ENCODE measurements at regions of chr1 and their contacts with region 1.

Region 1: DNA sequence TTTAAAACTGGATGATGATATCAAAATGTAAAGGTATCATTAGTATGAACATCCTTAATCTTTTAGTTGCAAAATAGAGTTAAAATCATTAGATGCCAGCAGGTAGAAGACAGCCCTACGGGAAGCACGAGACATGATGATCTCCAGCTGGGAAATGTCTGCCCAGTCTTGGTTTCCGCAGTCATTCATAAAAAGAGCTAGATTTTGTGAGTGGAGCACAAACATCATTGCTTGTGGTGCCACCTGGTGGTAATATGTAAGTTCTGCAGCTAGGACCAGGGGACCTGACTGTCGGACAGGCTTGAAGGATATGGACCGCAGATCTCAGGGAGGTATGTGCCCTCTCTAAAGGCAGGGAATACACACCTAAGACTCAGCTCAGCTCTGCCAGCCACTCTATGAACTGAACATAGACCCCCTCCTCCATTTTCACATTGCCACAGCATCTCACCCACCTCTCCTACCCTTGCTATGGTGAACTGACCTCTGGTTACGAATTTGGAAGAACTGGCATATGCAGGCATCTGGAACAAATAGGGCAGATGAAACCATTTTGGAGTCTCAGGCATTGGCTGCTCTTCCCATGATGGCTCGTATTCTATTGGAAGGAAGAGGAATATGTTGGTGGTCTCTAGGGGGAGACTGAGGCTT is 9.2 kb downstream of the FCMR start:
- DNase-seq: peak; percentile 80
- H3K4me3 ChIP-seq: no peak overlapping the region
- H3K27ac ChIP-seq: no peak overlapping the region
- H3K4me1 ChIP-seq: no peaks in the 10 kb centered on the region
- H3K27me3 ChIP-seq: peaks cover 29% of the 10 kb centered on the region
- CTCF ChIP-seq: peak; percentile 79

Region 2: DNA sequence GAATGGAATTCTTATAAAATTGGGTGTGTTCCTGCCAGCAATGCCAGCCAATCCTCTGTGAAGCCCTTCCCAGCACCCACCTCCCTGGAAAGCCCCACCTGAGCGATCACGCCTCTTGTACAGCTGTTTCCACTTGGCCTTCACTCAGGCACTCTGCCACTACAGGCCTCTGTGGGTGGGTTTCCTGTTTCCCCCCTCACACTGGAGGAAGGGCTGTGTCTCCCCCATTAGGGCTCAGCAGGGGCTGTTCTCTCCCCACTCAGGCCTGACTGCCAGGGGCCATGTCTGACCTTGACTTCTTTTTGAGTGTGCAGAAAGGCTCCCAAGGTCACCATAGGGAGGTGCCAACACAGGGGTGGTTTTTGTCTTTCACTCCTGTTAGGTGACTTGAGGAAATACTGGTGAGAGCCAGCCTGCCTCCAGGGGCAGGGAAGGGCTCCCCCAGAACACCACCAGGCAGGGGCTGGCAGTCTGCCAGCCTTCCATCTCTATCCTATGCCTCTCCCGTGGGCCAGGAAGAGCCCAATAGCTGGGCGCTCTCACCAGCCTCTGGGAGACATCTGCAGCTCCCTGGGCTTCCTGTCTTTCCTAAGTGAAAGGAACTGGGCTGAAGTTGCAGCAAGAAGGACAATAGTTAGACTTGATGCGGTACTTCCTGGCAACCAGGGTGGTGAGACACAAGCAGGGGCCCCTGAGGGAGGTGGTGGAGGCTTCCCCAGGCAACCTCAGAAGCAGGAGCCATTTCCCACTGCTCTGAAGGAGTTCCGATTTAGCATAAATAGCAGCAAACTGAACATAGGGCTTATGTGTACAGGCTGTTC is 1329.9 kb before region 1 on chr1:
- CTCF ChIA-PET with region 1: no interaction called
- POLR2A ChIA-PET with region 1: no interaction called
- intact Hi-C with region 1: no loop called
- DNase-seq: peak; percentile 58
- H3K4me3 ChIP-seq: no peak overlapping the region
- H3K27ac ChIP-seq: no peak overlapping the region
- H3K4me1 ChIP-seq: peaks cover 8% of the 10 kb centered on the region
- H3K27me3 ChIP-seq: peaks cover 16% of the 10 kb centered on the region
- CTCF ChIP-seq: no peak

Region 3: GRCh38 chr1:206489980-206490770 is 422.4 kb before region 1 on chr1:
- CTCF ChIA-PET with region 1: interaction called, 4 read pairs
- POLR2A ChIA-PET with region 1: interaction called, 4 read pairs
- intact Hi-C with region 1: loop called (anchors 5 kb)
- DNase-seq: peak; percentile 76
- H3K4me3 ChIP-seq: no peak overlapping the region
- H3K27ac ChIP-seq: no peak overlapping the region
- H3K4me1 ChIP-seq: no peaks in the 10 kb centered on the region
- H3K27me3 ChIP-seq: no peaks in the 10 kb centered on the region
- CTCF ChIP-seq: peak; percentile 97

Region 4: DNA sequence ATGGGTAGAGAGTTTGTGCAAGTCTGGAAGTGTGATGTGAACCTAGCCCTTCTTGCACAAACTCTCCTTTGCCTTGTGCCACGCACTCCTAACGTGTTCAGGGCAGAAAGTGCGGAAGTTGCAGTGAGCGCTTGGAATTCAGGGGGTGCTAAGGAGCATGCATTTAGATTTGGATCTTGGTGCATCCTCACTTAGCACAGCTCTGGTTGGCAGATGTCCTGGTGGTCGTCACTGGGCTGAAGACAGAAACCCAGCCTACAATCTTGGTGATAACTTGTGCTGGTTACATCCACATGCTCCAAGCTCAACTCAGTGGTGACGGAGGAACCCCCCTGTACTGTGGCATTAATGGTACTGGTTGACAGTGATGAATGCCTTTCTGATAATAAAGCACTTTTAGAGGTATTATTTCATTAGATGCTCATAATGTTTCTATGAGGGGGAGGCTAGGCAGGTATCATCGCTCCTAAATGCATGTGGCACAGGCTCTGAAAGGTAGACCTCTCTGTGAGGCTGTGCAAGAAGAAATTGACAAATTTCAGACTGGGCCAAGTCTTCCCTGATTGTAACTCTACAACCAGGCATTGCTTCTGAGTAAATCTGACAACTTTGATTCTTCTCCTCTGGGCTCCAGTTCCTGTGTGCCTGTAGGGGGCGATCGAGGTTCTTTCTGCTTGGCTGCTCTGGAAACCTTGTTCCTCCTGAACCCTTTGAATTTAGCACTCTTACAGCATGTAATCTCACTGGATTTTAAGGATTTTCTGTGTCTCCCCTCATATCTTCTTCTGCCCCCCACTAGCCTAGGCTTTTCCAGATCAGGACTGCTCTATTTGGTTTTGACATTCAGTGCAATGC is 187.2 kb before region 1 on chr1:
- CTCF ChIA-PET with region 1: interaction called, 6 read pairs
- POLR2A ChIA-PET with region 1: interaction called, 5 read pairs
- intact Hi-C with region 1: loop called (anchors 5 kb)
- DNase-seq: peak; percentile 65
- H3K4me3 ChIP-seq: no peak overlapping the region
- H3K27ac ChIP-seq: no peak overlapping the region
- H3K4me1 ChIP-seq: no peaks in the 10 kb centered on the region
- H3K27me3 ChIP-seq: no peaks in the 10 kb centered on the region
- CTCF ChIP-seq: peak; percentile 79

Region 5: GRCh38 chr1:206808615-206809014 is 104.0 kb before region 1 on chr1:
- CTCF ChIA-PET with region 1: interaction called, 3 read pairs
- POLR2A ChIA-PET with region 1: no interaction called
- intact Hi-C with region 1: loop called (anchors 2 kb)
- DNase-seq: peak; percentile 27
- H3K4me3 ChIP-seq: no peak overlapping the region
- H3K27ac ChIP-seq: no peak overlapping the region
- H3K4me1 ChIP-seq: no peaks in the 10 kb centered on the region
- H3K27me3 ChIP-seq: peaks cover 8% of the 10 kb centered on the region
- CTCF ChIP-seq: peak; percentile 38; the same call in 1 of the 2 replicates

Region 6: DNA sequence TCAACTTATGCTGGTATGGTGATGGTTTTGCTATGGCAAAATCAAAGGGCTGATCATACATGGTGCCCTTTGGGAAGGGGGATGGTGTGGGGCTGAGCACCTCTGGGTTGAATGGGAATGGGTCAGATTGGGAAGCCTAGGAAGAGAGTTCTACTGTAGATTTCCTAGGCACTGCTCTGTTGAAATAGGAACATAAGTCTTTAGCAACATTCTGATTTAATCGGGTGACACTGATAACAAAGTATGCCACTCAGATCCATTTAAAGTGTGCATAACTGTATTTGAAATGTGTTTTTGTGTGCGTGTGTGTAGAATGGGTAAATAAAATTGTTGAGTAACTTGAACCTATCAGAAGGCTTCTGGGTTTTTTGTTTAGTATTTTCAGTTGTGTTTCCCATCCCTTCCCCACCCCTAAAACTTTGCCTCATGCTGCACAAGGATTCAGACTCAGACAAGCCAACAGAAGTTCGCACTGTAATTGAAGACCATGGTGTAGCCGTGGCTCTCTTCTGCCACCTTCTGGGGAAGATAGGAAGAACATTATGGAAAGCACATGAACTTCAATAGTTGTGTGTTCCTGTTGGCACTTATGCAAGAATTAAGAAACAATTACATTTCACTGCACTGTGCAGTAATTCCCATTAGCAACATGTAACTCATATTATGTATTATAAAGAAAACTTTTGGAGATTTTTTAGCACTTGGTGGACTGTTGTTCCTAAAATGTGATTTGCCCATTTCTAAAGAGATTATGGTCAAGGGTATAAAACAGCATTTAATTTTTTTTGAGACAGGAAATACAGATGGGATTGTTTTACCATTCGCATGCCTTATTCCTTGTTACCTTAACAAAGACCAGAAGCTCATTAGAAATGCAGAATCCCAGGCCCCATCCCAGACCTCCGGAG is 165.2 kb after region 1 on chr1:
- CTCF ChIA-PET with region 1: no interaction called
- POLR2A ChIA-PET with region 1: no interaction called
- intact Hi-C with region 1: loop called (anchors 5 kb)
- DNase-seq: peak; percentile 80
- H3K4me3 ChIP-seq: no peak overlapping the region
- H3K27ac ChIP-seq: no peak overlapping the region
- H3K4me1 ChIP-seq: no peaks in the 10 kb centered on the region
- H3K27me3 ChIP-seq: peaks cover 4% of the 10 kb centered on the region
- CTCF ChIP-seq: peak; percentile 88